ENCODE measurements at regions of chr14 and their contacts with region 1.

Region 1: GRCh38 chr14:95993768-95994592 is 45.2 kb upstream of the C14orf132 start:
- DNase-seq: peak; percentile 43
- CTCF ChIP-seq: peak; percentile 71

Region 2: GRCh38 chr14:95561001-95561412 is 433.0 kb before region 1 on chr14:
- CTCF ChIA-PET with region 1: interaction called, 94 read pairs
- POLR2A ChIA-PET with region 1: no interaction called
- DNase-seq: peak; percentile 89
- CTCF ChIP-seq: peak; percentile 90

Region 3: GRCh38 chr14:95609387-95609990 is 384.5 kb before region 1 on chr14:
- CTCF ChIA-PET with region 1: interaction called, 12 read pairs
- POLR2A ChIA-PET with region 1: no interaction called
- DNase-seq: peak; percentile 46
- CTCF ChIP-seq: peak; percentile 71

Region 4: GRCh38 chr14:95979339-95980042 is 14.5 kb before region 1 on chr14:
- CTCF ChIA-PET with region 1: interaction called, 57 read pairs
- POLR2A ChIA-PET with region 1: no interaction called
- DNase-seq: no peak
- CTCF ChIP-seq: no peak

Region 5: GRCh38 chr14:96011607-96012006 is 17.6 kb after region 1 on chr14:
- CTCF ChIA-PET with region 1: interaction called, 11 read pairs
- POLR2A ChIA-PET with region 1: no interaction called
- DNase-seq: no peak
- CTCF ChIP-seq: no peak